Caco-2 (cell line): ENCODE measurements at regions of chr2 and their contacts with region 1.

Region 1: DNA sequence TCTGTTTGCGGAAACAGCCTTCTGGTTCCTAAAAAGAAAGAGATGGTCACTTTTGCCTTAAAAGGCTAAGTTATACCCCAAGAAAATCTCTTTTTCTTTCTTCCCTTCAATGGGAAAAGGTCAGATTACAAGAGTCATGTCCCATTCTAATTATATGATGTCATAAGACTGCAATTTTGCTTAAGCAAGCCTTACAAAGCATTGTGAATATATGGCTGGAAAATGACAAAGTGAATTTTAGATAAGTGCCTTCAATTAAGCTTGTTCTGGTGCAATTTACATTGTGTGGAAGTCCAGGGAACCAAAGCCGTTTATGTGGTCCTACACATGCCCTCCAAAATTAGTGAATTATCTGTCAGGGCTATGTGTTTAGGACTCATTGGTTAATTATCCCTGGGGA is 7.6 kb upstream of the BMP10 start:
- DNase-seq: no peak
- H3K4me3 ChIP-seq: no peak overlapping the region
- H3K4me3 Mint-ChIP-seq: no peak overlapping the region
- H3K27ac Mint-ChIP-seq: peak overlapping the region; percentile 48
- H3K4me1 ChIP-seq: peaks cover 31% of the 10 kb centered on the region
- H3K4me1 Mint-ChIP-seq: peaks cover 7% of the 10 kb centered on the region
- H3K27me3 ChIP-seq: no peaks in the 10 kb centered on the region
- H3K27me3 Mint-ChIP-seq: no peaks in the 10 kb centered on the region
- CTCF ChIP-seq: no peak

Region 2: GRCh38 chr2:68889500-68890185 is 10.9 kb after region 1 on chr2:
- CTCF ChIA-PET with region 1: no interaction called
- POLR2A ChIA-PET with region 1: no interaction called
- intact Hi-C with region 1: loop called (anchors 1 kb)
- DNase-seq: peak; percentile 48 to 79
- H3K4me3 ChIP-seq: no peak overlapping the region
- H3K4me3 Mint-ChIP-seq: no peak overlapping the region
- H3K27ac Mint-ChIP-seq: peak overlapping the region; percentile 65
- H3K4me1 ChIP-seq: peaks cover 7% of the 10 kb centered on the region
- H3K4me1 Mint-ChIP-seq: peaks cover 24% of the 10 kb centered on the region
- H3K27me3 ChIP-seq: no peaks in the 10 kb centered on the region
- H3K27me3 Mint-ChIP-seq: no peaks in the 10 kb centered on the region
- CTCF ChIP-seq: no peak